ENCODE measurements at regions of chr12 and their contacts with region 1.

Region 1: GRCh38 chr12:53543539-53543938 is 36.3 kb upstream of the NPFF start:
- DNase-seq: peak; percentile 41
- H3K4me3 ChIP-seq: no peak overlapping the region
- H3K27ac ChIP-seq: peak overlapping the region; percentile 52
- H3K27me3 ChIP-seq: no peaks in the 10 kb centered on the region
- CTCF ChIP-seq: peak; percentile 98

Region 2: GRCh38 chr12:53441040-53441833 is 102.3 kb before region 1 on chr12 and contains the start of gene PRR13:
- CTCF ChIA-PET with region 1: no interaction called
- POLR2A ChIA-PET with region 1: no interaction called
- DNase-seq: peak; percentile 98
- H3K4me3 ChIP-seq: peak within 1 kb of the TSS; percentile 80
- H3K27ac ChIP-seq: peak within 1 kb of the TSS; percentile 88
- H3K27me3 ChIP-seq: no peaks in the 10 kb centered on the region
- CTCF ChIP-seq: no peak
- polyA plus RNA-seq, gene PRR13: 71.4 and 92.8 TPM in 2 replicates

Region 3: GRCh38 chr12:53530061-53530460 is 13.5 kb before region 1 on chr12:
- CTCF ChIA-PET with region 1: interaction called, 12 read pairs
- POLR2A ChIA-PET with region 1: no interaction called
- DNase-seq: no peak
- H3K4me3 ChIP-seq: no peak overlapping the region
- H3K27ac ChIP-seq: no peak overlapping the region
- H3K27me3 ChIP-seq: no peaks in the 10 kb centered on the region
- CTCF ChIP-seq: no peak

Region 4: GRCh38 chr12:53561590-53561953 is 18.0 kb after region 1 on chr12:
- CTCF ChIA-PET with region 1: interaction called, 10 read pairs
- POLR2A ChIA-PET with region 1: no interaction called
- DNase-seq: peak; percentile 63
- H3K4me3 ChIP-seq: no peak overlapping the region
- H3K27ac ChIP-seq: peak overlapping the region; percentile 49
- H3K27me3 ChIP-seq: no peaks in the 10 kb centered on the region
- CTCF ChIP-seq: no peak

Region 5: GRCh38 chr12:53568809-53569557 is 25.4 kb after region 1 on chr12:
- CTCF ChIA-PET with region 1: interaction called, 12 read pairs
- POLR2A ChIA-PET with region 1: no interaction called
- DNase-seq: peak; percentile 53
- H3K4me3 ChIP-seq: no peak overlapping the region
- H3K27ac ChIP-seq: no peak overlapping the region
- H3K27me3 ChIP-seq: no peaks in the 10 kb centered on the region
- CTCF ChIP-seq: no peak

Region 6: GRCh38 chr12:53613821-53614220 is 70.3 kb after region 1 on chr12:
- CTCF ChIA-PET with region 1: interaction called, 14 read pairs
- POLR2A ChIA-PET with region 1: no interaction called
- DNase-seq: no peak
- H3K4me3 ChIP-seq: no peak overlapping the region
- H3K27ac ChIP-seq: peak overlapping the region; percentile 21
- H3K27me3 ChIP-seq: no peaks in the 10 kb centered on the region
- CTCF ChIP-seq: no peak

Region 7: DNA sequence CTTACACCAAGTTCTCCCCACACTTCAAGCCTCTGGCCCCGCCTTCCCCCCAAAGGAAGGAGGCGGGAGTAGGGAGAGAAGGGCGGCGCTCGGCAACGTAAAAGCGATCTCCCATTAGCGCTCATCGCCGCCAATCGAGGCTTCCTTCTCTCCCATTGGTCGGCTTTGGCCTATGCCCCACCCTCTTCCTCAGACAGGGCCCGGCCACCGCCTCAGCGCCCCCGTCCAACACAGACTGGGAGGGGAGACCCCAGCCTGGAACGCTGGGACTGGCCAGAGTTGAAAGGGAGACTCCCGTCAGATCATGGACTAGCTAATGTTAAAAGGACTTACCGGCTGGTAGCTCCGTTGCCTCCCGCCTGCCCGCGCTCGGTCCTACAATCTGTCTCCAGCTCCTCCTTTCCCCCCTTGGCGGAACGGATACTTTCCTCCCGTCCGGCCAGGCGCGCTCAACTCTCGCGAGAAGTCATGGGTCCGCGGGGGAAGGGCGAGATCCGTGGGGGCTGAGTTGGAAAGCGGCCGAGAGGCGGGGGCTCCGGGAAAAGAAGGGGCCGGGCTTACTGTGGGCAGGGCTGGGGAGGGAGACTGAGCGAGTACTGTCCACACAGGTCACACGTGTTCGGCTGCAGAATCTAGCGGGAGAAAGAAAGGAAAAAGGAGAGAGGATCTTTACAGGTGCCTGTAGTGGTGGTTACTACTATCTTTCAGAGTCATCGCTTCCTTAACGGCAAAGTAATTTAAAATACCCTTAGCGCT is 82.6 kb after region 1 on chr12 and contains the start of gene ATF7:
- CTCF ChIA-PET with region 1: interaction called, 25 read pairs
- POLR2A ChIA-PET with region 1: no interaction called
- DNase-seq: peak; percentile 93
- H3K4me3 ChIP-seq: peak within 1 kb of the TSS; percentile 84
- H3K27ac ChIP-seq: peak within 1 kb of the TSS; percentile 93
- H3K27me3 ChIP-seq: no peaks in the 10 kb centered on the region
- CTCF ChIP-seq: no peak
- polyA plus RNA-seq, gene ATF7: 21.7 and 27.1 TPM in 2 replicates

Region 8: DNA sequence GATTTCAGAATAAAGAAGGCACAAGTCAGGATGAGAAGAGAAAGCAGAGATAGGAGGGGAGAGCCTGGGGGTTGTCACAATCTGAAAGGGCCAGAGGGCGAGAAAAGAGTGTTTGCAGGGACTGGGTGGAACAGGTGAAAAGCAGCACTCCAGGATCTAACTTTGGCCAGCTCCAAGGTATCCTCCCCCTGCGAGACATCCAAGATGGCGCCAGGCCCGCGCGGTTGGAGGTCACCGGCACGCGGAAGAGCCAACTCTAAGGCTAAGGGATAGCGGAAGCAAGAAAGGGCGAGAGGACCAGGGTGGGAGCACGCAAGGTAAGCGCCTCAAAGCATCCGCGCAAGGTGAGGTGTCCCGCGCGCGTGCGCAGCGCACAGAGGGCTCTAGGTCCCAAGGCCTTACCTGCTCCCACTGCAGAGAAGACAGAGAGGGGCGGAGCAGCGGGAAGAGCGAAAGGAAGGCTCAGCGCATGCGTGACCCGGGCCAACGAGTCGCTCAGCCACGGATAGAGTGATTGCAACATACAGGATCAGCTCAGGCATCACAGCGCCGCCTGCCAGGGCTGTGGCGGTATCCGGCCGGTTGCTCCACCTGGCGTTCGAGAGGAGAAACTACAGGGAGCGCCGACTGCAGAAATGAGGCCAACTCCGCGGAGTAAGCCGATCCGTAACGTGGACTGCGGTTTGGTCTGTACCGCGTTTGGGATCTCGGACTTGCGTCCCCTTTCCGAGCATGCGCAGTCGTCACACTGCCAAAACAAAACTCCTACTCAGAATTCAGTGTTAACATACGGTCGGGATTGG is 132.3 kb after region 1 on chr12 and contains the start of gene ATP5MC2:
- CTCF ChIA-PET with region 1: interaction called, 103 read pairs
- POLR2A ChIA-PET with region 1: interaction called, 11 read pairs
- DNase-seq: peak; percentile 99
- H3K4me3 ChIP-seq: peak within 1 kb of the TSS; percentile 94
- H3K27ac ChIP-seq: peak within 1 kb of the TSS; percentile 91
- H3K27me3 ChIP-seq: no peaks in the 10 kb centered on the region
- CTCF ChIP-seq: peak; percentile 100
- polyA plus RNA-seq, gene ATP5MC2: 261 and 433 TPM in 2 replicates

Region 9: GRCh38 chr12:53892760-53893159 is 349.2 kb after region 1 on chr12:
- CTCF ChIA-PET with region 1: no interaction called
- POLR2A ChIA-PET with region 1: no interaction called
- DNase-seq: no peak
- H3K4me3 ChIP-seq: no peak overlapping the region
- H3K27ac ChIP-seq: no peak overlapping the region
- H3K27me3 ChIP-seq: peaks cover 2% of the 10 kb centered on the region
- CTCF ChIP-seq: no peak